ENCODE measurements at regions of chr2 and their contacts with region 1.

Region 1: DNA sequence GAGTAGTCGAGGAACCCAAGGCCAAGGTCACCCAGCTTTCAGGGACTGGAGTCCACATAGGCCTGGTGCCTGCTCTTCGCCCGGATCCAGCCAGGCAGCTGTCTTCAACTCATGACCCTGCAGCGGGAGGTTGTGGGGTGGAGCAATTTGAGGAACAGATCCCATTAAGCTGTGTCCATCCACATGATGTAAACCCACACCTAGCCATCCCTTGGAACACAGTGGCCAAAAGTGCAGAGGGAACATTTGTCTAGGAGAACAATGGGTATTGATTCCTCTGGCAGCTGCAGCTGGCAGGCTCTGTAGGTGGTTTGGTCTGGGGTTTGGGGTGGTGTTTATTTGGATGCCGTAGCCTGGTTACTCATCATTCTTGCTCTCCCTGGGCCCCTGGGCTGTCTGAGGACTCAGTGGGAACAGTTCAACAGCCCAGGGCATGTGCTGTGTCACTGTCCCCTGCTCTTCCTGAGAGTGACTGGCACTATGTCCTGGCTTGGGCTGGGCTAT is 99.4 kb downstream of the TFCP2L1 start:
- DNase-seq: peak in 1 of 2 donors; percentile 26
- ATAC-seq: peak; percentile 58 to 83 (median 78)
- H3K4me3 ChIP-seq: no peak overlapping the region
- H3K27ac ChIP-seq: no peak overlapping the region
- H3K4me1 ChIP-seq: no peaks in the 10 kb centered on the region
- H3K27me3 ChIP-seq: no peaks in the 10 kb centered on the region
- CTCF ChIP-seq: no peak

Region 2: DNA sequence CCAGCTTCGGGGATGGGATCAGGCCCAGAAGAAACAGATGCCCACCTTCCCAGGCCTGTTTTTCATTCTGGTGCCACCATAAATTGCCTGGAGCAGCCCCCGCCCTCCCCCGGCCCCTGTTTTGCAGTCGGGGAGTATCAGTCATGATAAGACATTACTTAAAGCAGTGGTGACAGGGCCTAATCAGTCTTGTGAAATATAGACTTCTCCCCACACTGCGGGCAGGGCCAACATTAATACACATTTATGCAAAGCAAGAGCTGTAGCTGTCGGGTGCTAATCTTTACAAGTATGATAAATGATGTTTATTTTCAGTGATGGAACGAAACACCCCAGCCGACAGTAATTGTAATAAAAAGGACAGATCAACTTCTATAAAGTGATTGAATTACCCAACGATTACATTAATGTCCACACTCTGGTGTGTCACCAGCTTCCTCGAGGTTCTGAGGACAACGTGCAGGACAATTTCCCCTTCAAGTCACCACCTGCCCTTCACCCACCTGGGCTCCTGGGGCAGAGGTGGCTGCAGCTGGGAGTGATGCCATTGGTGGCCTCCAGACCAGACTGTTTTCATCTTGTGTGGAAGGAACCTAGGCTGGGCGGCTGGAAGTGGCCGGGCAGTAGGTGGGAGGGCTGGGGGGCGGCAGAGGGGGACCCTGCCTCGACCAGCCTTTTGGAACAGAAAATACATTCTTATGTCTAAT is 126.6 kb before region 1 on chr2:
- intact Hi-C with region 1: no loop called
- DNase-seq: no peak
- ATAC-seq: no peak
- H3K4me3 ChIP-seq: no peak overlapping the region
- H3K27ac ChIP-seq: no peak overlapping the region
- H3K4me1 ChIP-seq: no peaks in the 10 kb centered on the region
- H3K27me3 ChIP-seq: peaks cover 0 to 5% (median 2%) of the 10 kb centered on the region in 3 donors
- CTCF ChIP-seq: no peak

Region 3: GRCh38 chr2:121333834-121334558 is 148.4 kb after region 1 on chr2:
- intact Hi-C with region 1: loop called in 1 of 2 experiments (anchors 10 kb)
- DNase-seq: no peak
- ATAC-seq: no peak
- H3K4me3 ChIP-seq: no peak overlapping the region
- H3K27ac ChIP-seq: no peak overlapping the region
- H3K4me1 ChIP-seq: peaks cover 9% of the 10 kb centered on the region
- H3K27me3 ChIP-seq: no peaks in the 10 kb centered on the region
- CTCF ChIP-seq: no peak

Measured in psoas muscle (tissue), 8 donors.